ENCODE measurements at regions of chr2 and their contacts with region 1.

Region 1: GRCh38 chr2:35973132-35973736 is 382.3 kb upstream of the CRIM1 start:
- DNase-seq: peak; percentile 27
- ATAC-seq: peak; percentile 60
- H3K4me3 Mint-ChIP-seq: no peak overlapping the region
- H3K27ac Mint-ChIP-seq: no peak overlapping the region
- H3K4me1 Mint-ChIP-seq: peaks cover 2% of the 10 kb centered on the region
- H3K27me3 Mint-ChIP-seq: peaks cover 2% of the 10 kb centered on the region

Region 2: GRCh38 chr2:35794796-35795450 is 178.3 kb before region 1 on chr2:
- CTCF ChIA-PET with region 1: no interaction called
- POLR2A ChIA-PET with region 1: no interaction called
- intact Hi-C with region 1: no loop called
- DNase-seq: no peak
- ATAC-seq: no peak
- H3K4me3 Mint-ChIP-seq: no peak overlapping the region
- H3K27ac Mint-ChIP-seq: no peak overlapping the region
- H3K4me1 Mint-ChIP-seq: no peaks in the 10 kb centered on the region
- H3K27me3 Mint-ChIP-seq: peaks cover 7% of the 10 kb centered on the region

Region 3: DNA sequence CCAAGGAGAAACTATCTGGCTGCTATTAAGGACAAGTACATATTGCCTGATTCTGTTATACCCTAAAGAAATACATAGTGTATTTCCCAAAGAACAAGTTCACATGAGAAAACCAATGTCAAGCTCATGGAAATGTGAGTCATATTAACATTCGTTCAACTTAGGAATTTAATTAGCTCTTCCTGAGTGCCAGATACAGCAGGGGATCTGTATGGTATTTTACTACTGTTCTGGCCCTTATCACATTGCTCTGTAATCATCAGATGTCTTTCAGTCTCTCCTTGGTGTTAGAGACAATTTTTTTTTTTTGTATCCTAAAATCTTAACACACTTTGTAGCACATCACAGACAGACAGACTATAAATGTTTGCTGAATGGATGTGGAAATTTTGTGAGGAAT is 12.6 kb before region 1 on chr2:
- CTCF ChIA-PET with region 1: interaction called, 13 read pairs
- POLR2A ChIA-PET with region 1: no interaction called
- intact Hi-C with region 1: no loop called
- DNase-seq: no peak
- ATAC-seq: no peak
- H3K4me3 Mint-ChIP-seq: no peak overlapping the region
- H3K27ac Mint-ChIP-seq: no peak overlapping the region
- H3K4me1 Mint-ChIP-seq: no peaks in the 10 kb centered on the region
- H3K27me3 Mint-ChIP-seq: no peaks in the 10 kb centered on the region

Region 4: GRCh38 chr2:36338817-36339125 is 365.5 kb after region 1 on chr2:
- CTCF ChIA-PET with region 1: no interaction called
- POLR2A ChIA-PET with region 1: no interaction called
- intact Hi-C with region 1: loop called in 1 of 2 experiments (anchors 5 kb)
- DNase-seq: no peak
- ATAC-seq: no peak
- H3K4me3 Mint-ChIP-seq: no peak overlapping the region
- H3K27ac Mint-ChIP-seq: no peak overlapping the region
- H3K4me1 Mint-ChIP-seq: peaks cover 8% of the 10 kb centered on the region
- H3K27me3 Mint-ChIP-seq: peaks cover 14% of the 10 kb centered on the region

Region 5: DNA sequence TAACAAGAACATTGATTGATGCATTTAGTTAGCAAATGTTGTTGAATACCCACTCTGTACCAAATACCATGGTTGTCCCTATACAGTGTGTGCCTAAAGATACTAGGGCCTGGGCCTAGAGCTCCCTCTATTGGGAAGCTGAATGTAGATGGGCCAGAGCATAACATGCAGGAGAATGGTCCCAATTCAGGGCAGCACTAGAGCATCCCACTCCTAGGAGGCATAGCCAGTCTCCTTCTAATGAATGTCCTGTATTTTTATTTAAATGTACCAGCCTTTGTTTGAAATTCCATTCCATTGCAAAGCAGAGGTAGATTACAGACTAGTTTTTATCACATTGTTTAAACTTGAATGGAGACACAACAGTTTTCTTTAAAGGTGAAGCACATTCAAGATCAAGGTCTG is 534.2 kb after region 1 on chr2:
- CTCF ChIA-PET with region 1: no interaction called
- POLR2A ChIA-PET with region 1: no interaction called
- intact Hi-C with region 1: loop called in 1 of 2 experiments (anchors 5 kb)
- DNase-seq: peak; percentile 57
- ATAC-seq: peak; percentile 92
- H3K4me3 Mint-ChIP-seq: no peak overlapping the region
- H3K27ac Mint-ChIP-seq: no peak overlapping the region
- H3K4me1 Mint-ChIP-seq: no peaks in the 10 kb centered on the region
- H3K27me3 Mint-ChIP-seq: no peaks in the 10 kb centered on the region